ENCODE measurements at regions of chr11 and their contacts with region 1.

Region 1: DNA sequence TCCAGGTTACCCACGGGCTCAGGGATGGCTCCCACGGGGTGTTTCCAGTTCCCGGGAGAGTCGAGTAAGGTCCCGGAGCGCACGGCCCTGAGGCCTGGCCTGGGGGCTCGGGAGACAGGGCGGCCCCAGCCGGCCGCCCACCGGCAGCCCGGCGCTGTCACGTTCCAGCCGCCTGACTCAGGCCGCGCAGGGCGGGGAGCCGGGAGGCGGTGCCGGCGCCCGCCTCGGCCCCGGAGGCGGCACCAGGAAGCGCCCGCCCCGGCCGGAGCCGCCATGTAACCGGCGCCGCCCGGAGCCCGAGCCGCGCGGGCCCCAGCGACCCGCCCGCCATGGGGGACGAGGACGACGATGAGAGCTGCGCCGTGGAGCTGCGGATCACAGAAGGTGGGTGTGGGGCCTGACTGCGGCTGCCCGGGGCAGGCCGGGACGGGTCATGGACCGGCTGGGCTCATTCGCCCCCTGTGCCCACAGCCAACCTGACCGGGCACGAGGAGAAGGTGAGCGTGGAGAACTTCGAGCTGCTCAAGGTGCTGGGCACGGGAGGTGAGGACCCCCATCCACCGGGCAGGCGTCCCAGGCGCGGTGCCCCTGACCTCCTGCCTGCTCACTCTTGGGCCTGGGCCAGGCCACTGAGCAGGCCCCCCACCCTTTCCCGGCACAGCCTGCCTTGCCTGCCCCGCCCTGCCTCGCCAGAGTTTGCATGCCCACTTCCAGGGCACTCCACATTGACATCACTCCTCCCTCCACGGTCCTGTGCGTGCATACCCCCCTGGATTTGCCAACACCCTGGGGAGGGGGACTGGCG is at the start of gene RPS6KA4:
- DNase-seq: peak; percentile 78
- H3K4me3 Mint-ChIP-seq: peak within 1 kb of the TSS; percentile 80
- H3K27ac Mint-ChIP-seq: peak within 1 kb of the TSS; percentile 36
- H3K4me1 Mint-ChIP-seq: peaks cover 35% of the 10 kb centered on the region
- H3K27me3 Mint-ChIP-seq: no peaks in the 10 kb centered on the region
- CTCF ChIP-seq: no peak
- total RNA-seq, gene RPS6KA4: 46.0 and 56.5 TPM in 2 replicates

Region 2: DNA sequence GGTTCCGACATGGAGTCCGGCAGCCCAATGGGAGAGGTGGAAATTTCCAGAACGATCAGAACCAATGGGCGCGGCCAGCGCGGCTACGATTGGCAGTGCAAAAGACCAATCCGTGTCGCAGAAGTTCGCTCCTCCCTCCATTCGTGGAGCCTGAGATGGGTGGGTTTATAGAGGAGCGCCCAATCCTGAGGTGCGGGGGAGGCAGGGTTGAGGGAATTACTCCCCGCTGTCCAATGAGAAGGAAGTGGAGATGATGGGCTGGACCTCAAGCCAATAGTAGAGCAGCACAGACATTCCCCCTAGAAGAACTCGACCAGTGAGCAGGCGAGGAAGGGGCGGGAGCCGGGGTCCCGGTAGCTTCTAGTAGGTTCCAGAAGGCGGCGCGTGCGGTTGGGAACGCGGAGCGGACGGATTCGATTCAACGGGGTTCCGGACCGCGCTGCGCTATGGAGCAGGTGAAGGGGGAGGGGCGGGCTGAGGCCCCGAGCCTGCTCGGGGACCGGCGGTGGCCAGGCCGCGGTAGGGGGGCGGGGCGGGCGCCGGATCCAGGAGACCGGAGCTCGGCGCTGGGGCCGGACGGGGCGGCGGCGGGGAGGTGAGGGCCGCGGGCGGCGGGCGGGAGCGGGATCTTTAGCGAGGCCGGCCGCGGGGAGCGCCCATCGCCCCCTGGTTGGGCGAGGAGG is 173.2 kb before region 1 on chr11 and contains the start of gene STIP1:
- CTCF ChIA-PET with region 1: interaction called, 12 read pairs
- intact Hi-C with region 1: no loop called
- DNase-seq: peak; percentile 97
- H3K4me3 Mint-ChIP-seq: no peak within 1 kb of the TSS
- H3K27ac Mint-ChIP-seq: no peak within 1 kb of the TSS
- H3K4me1 Mint-ChIP-seq: peaks cover 27% of the 10 kb centered on the region
- H3K27me3 Mint-ChIP-seq: no peaks in the 10 kb centered on the region
- CTCF ChIP-seq: no peak
- total RNA-seq, gene STIP1: 344 and 391 TPM in 2 replicates

Region 3: DNA sequence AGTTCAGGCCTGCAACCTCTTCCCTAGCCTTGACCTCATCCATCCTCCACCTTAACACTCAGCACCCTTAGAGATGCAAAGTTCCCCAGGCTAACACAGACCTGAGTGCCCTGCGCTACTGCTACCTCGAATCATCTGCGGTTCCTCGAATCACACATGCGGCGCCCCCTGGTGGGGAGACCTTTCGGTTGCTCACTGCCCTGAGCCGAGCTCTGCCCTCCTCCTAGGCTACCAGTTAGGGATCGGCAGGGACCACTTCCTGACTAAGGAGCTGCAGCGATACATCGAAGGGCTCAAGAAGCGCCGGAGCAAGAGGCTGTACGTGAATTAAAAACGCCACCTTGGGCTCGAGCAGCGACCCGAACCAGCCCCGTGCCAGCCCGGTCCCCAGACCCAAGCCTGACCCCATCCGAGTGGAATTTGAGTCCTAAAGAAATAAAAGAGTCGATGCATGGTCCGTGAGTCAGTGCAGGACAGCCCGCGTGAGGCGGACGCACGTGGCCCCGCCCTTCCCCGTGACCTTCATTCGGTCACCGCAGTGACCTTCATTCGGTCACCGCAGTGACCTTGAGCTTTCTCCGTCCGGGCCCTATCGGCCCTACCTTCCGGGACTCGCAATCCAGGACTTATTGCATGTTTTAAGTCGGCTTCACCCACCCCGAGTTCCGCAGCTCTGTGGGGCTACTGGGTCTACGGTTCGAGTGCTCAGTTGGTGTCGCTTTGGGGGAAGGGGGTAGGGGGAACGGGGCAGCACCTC is 54.6 kb before region 1 on chr11:
- CTCF ChIA-PET with region 1: interaction called, 25 read pairs
- intact Hi-C with region 1: no loop called
- DNase-seq: peak; percentile 96
- H3K4me3 Mint-ChIP-seq: peak overlapping the region; percentile 100
- H3K27ac Mint-ChIP-seq: peak overlapping the region; percentile 50
- H3K4me1 Mint-ChIP-seq: peaks cover 31% of the 10 kb centered on the region
- H3K27me3 Mint-ChIP-seq: peaks cover 16% of the 10 kb centered on the region
- CTCF ChIP-seq: peak; percentile 58

Region 4: DNA sequence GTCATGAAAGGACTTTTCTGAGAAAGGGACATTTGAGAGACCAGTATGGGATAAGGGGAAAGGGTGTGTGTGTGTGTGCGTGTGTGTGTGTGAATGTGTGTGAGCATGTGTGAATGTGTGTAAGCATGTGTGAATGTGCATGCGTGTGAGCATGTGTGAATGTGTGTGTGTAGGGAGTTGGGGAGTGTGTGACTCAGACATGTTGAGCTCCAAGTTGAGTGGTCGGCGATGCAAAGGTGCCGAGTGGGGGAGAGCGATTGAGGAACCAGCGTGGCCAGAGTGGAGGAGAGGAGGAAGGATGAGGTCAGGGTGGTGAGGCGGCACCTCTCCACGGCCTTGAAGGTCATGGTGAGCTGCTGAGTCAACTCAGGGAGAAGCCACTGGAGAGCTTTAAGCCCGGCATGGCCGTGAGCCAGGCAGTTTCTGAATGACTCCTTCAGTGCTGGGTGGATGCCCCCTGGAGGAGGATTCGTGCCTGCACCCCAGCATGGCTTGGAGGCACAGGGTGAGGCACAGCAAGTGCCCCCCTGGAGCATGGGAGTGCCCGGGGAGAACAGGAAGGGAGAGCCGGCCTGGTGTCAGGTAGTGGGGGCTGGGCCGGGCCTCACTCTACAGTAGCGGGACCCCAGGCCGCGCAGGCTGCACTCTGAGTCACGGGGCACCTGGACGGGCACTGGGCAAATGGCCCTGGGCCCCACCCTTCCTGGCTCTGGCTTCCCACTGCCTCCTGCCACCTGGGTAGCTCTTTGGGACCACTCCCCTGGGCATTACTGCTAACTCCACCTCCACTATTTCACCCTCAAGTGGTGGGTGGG is 27.3 kb before region 1 on chr11:
- CTCF ChIA-PET with region 1: interaction called, 25 read pairs
- intact Hi-C with region 1: no loop called
- DNase-seq: peak; percentile 84
- H3K4me3 Mint-ChIP-seq: no peak overlapping the region
- H3K27ac Mint-ChIP-seq: no peak overlapping the region
- H3K4me1 Mint-ChIP-seq: peaks cover 24% of the 10 kb centered on the region
- H3K27me3 Mint-ChIP-seq: no peaks in the 10 kb centered on the region
- CTCF ChIP-seq: peak; percentile 62

Region 5: DNA sequence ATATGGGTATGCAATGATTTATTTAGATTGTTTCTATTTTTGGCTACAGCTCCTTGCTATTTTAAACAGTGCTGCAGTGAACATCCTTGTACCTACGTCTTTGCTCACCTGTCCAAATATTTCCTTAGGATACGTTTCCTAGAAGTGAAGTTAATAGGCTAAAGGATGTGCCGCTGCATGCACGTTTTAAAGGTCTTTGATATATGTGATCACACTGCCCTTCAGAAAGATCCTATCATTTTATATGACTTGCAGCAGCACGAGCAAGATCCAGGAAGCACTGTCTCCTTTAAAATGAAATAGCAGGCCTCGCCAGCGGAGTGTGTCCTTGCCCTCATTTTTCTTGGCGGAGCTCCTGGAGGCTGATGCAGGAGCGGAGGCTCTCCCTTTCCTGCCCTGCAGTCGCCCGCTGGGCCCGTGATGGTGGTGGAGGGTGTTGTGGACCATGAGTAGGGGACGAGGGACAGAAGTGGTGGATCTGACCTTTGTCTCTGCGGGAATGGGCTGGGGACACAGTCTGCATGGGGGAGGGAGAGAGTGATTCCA is 19.3 kb after region 1 on chr11:
- CTCF ChIA-PET with region 1: no interaction called
- intact Hi-C with region 1: no loop called
- DNase-seq: no peak
- H3K4me3 Mint-ChIP-seq: no peak overlapping the region
- H3K27ac Mint-ChIP-seq: no peak overlapping the region
- H3K4me1 Mint-ChIP-seq: peaks cover 8% of the 10 kb centered on the region
- H3K27me3 Mint-ChIP-seq: peaks cover 16% of the 10 kb centered on the region
- CTCF ChIP-seq: no peak

Region 6: DNA sequence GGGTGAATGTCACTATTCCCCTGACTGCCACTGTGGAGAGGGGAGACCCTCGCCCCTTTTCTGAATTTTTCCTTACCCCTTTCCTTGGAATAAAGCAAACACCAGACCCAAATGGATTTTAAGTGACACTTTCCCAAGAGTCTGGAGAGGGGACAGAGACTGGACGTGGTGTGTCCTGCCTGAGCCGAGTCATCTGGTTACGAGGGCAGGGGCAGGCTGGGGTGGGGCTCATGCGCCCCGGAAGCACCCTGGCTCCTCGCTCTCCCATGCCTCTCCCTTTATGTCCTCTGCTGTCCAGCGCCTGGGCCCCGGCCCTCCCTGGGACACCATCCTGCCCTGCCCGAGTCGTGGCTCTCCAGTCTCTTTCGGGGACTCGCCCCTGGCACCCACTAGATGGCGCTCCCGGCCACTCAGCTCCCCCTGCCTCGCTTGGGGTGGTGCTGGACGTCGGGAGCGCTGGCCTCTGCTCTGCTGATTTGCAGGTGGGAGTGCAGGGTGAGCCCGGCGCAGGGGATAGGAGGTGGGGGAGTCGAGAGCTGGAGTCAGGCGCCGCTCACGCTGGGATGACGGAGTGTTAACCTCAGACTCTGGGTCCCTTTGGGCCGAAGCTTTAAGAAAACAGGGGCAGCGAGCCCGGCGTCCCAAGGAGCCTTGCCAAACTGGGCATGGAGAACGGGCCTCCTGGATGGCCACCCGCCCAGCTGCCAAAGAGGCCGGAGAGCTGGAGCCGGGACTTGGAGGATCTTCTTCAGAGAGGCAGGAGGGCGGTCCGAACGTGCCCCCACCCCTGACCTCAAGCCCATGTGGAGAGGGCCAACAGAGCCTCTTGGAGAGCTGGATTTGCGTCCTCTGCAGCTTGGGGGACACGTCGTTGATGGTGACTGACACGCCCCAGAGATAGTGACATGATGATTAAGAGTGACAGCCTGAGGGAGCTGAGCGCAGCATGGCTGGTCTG is 89.8 kb after region 1 on chr11:
- CTCF ChIA-PET with region 1: interaction called, 10 read pairs
- intact Hi-C with region 1: no loop called
- DNase-seq: peak; percentile 90
- H3K4me3 Mint-ChIP-seq: peak overlapping the region; percentile 62
- H3K27ac Mint-ChIP-seq: no peak overlapping the region
- H3K4me1 Mint-ChIP-seq: peaks cover 10% of the 10 kb centered on the region
- H3K27me3 Mint-ChIP-seq: peaks cover 88% of the 10 kb centered on the region
- CTCF ChIP-seq: peak; percentile 61

Region 7: DNA sequence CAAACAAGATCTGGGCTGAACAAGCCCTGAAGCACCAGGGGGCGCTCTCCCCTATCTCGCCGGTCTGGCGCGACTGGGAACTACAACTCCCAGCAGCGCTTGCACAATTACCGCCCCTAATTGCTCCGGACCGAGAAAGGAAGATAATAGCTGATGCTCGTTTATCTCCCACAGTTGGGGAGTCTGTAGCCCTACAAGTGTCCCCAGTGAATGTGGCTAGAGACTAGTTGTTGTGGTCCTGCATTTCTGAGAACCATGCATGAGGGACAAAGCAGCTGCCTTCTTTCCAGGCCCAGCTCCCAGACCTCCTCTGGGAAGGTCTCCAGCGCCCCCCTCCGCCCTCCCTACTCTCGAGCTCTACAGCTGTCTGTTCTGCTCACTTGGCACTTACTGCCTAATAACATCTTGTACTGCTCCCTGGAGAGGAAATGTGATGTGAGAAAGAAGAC is 329.4 kb after region 1 on chr11:
- CTCF ChIA-PET with region 1: interaction called, 11 read pairs
- intact Hi-C with region 1: no loop called
- DNase-seq: peak; percentile 91
- H3K4me3 Mint-ChIP-seq: peak overlapping the region; percentile 36
- H3K27ac Mint-ChIP-seq: no peak overlapping the region
- H3K4me1 Mint-ChIP-seq: no peaks in the 10 kb centered on the region
- H3K27me3 Mint-ChIP-seq: peaks cover 100% of the 10 kb centered on the region
- CTCF ChIP-seq: peak; percentile 88